ENCODE measurements at regions of chr1 and their contacts with region 1.

Region 1: DNA sequence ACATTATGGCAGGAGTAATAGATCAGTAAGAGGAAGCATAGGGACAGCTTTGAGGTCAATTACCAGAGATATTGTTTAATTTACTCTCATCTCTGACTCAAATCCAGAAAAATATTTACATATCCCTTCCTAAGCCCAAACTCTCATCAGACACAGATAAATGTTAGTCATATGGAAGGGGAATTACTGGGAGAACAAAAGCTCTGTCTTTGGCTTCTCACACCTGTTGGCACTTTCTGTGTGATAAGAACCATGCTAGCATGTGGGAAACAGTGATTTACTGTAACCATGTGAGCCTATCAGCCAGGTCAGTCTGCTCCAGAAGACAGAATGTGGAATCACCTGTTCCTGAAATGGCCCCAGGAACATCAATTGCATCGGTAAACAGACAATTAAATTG is 72.4 kb downstream of the DUSP10 start:
- DNase-seq: no peak
- ATAC-seq: no peak
- H3K4me3 ChIP-seq: no peak overlapping the region
- H3K4me3 Mint-ChIP-seq: no peak overlapping the region
- H3K27ac ChIP-seq: no peak overlapping the region
- H3K27ac Mint-ChIP-seq: no peak overlapping the region
- H3K4me1 ChIP-seq: no peaks in the 10 kb centered on the region
- H3K4me1 Mint-ChIP-seq: no peaks in the 10 kb centered on the region
- H3K27me3 ChIP-seq: no peaks in the 10 kb centered on the region
- H3K27me3 Mint-ChIP-seq: peaks cover 9% of the 10 kb centered on the region
- CTCF ChIP-seq: no peak

Region 2: DNA sequence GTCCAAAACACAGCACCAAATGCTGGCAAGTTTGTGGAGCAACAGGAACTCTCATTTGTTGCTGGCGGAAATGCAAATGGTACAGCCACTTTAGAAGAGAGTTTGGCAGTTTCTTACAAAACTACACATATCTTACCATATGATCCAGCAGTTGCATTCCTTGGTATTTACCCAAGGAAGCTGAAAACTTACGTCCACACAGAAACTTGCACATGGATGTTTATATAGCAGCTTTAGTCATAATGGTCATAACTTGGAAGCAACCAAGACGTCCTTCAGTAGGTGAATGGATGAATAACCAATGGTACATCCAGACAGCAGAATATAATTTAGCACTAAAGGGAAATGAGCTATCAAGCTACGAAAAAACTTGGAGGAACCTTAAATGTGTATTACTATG is 1075.1 kb before region 1 on chr1:
- CTCF ChIA-PET with region 1: no interaction called
- POLR2A ChIA-PET with region 1: no interaction called
- intact Hi-C with region 1: no loop called
- DNase-seq: no peak
- ATAC-seq: no peak
- H3K4me3 ChIP-seq: no peak overlapping the region
- H3K4me3 Mint-ChIP-seq: no peak overlapping the region
- H3K27ac ChIP-seq: no peak overlapping the region
- H3K27ac Mint-ChIP-seq: no peak overlapping the region
- H3K4me1 ChIP-seq: no peaks in the 10 kb centered on the region
- H3K4me1 Mint-ChIP-seq: no peaks in the 10 kb centered on the region
- H3K27me3 ChIP-seq: no peaks in the 10 kb centered on the region
- H3K27me3 Mint-ChIP-seq: peaks cover 10% of the 10 kb centered on the region
- CTCF ChIP-seq: no peak

Region 3: DNA sequence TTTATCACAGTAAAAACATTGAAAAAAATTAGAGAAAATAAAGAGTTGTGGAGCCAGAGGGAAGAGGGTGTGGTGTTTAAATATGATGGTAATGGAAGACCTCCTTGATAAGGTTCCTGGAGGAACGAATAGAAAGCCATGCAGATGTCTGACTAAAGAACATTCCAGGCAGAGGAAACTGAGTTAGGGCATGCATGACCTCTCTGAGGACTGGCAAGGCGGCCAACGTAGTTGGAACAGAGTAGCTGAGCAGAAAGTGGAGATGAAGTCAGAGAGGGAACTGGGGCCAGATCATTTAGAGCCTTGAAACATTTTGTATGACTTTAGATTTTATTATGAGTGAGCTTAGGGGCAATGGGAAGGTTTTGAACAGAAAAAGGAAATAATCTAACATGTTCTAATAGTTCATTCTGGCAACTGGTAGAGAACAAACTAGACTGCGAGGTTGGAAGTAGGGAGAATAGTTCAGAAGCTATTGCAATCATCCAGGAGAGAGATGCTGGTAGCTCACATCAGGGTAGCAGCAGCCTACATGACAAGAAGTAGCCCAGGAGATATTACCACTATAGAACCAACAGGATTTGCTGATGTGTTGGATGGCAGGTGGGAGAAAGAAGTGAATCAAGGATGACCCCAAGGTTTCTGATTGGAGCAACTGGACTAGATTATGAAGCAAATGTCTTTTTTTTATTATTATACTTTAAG is 412.5 kb before region 1 on chr1:
- CTCF ChIA-PET with region 1: no interaction called
- POLR2A ChIA-PET with region 1: no interaction called
- intact Hi-C with region 1: no loop called
- DNase-seq: no peak
- ATAC-seq: no peak
- H3K4me3 ChIP-seq: no peak overlapping the region
- H3K4me3 Mint-ChIP-seq: no peak overlapping the region
- H3K27ac ChIP-seq: no peak overlapping the region
- H3K27ac Mint-ChIP-seq: no peak overlapping the region
- H3K4me1 ChIP-seq: no peaks in the 10 kb centered on the region
- H3K4me1 Mint-ChIP-seq: no peaks in the 10 kb centered on the region
- H3K27me3 ChIP-seq: no peaks in the 10 kb centered on the region
- H3K27me3 Mint-ChIP-seq: no peaks in the 10 kb centered on the region
- CTCF ChIP-seq: no peak

Region 4: GRCh38 chr1:221643404-221644144 is 25.9 kb before region 1 on chr1:
- CTCF ChIA-PET with region 1: no interaction called
- POLR2A ChIA-PET with region 1: no interaction called
- intact Hi-C with region 1: loop called in 1 of 2 experiments (anchors 2 kb)
- DNase-seq: no peak
- ATAC-seq: no peak
- H3K4me3 ChIP-seq: no peak overlapping the region
- H3K4me3 Mint-ChIP-seq: no peak overlapping the region
- H3K27ac ChIP-seq: no peak overlapping the region
- H3K27ac Mint-ChIP-seq: no peak overlapping the region
- H3K4me1 ChIP-seq: no peaks in the 10 kb centered on the region
- H3K4me1 Mint-ChIP-seq: no peaks in the 10 kb centered on the region
- H3K27me3 ChIP-seq: no peaks in the 10 kb centered on the region
- H3K27me3 Mint-ChIP-seq: no peaks in the 10 kb centered on the region
- CTCF ChIP-seq: no peak

Region 5: DNA sequence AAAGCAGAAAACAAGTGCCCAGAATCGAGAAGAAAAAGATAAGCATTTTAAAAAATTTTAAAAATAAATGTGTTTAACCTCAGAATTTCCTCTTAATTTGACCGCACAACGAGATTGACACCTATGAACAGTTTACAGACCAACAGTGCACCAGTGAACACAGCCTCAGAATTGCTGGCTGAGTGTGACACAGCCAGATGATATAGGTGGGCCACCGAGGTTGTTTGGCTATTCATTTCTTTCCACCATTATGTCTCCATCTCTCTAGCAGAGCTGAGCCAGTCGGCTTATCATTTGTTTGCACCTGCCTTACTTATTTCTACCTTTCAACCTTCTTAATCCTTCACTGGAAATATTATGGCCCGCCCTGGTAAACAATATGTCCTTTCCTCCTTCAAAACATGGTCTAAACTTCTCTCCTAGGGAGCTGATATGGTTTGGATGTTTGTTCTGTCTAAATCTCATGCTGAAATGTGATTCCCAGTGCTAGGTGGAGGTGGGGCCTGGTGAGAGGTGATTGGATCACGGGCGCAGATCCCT is 13.6 kb before region 1 on chr1:
- CTCF ChIA-PET with region 1: no interaction called
- POLR2A ChIA-PET with region 1: no interaction called
- intact Hi-C with region 1: no loop called
- DNase-seq: no peak
- ATAC-seq: no peak
- H3K4me3 ChIP-seq: no peak overlapping the region
- H3K4me3 Mint-ChIP-seq: no peak overlapping the region
- H3K27ac ChIP-seq: no peak overlapping the region
- H3K27ac Mint-ChIP-seq: no peak overlapping the region
- H3K4me1 ChIP-seq: no peaks in the 10 kb centered on the region
- H3K4me1 Mint-ChIP-seq: no peaks in the 10 kb centered on the region
- H3K27me3 ChIP-seq: no peaks in the 10 kb centered on the region
- H3K27me3 Mint-ChIP-seq: no peaks in the 10 kb centered on the region
- CTCF ChIP-seq: no peak

Region 6: GRCh38 chr1:221683681-221684080 is 14.2 kb after region 1 on chr1:
- CTCF ChIA-PET with region 1: no interaction called
- POLR2A ChIA-PET with region 1: no interaction called
- intact Hi-C with region 1: no loop called
- DNase-seq: no peak
- ATAC-seq: no peak
- H3K4me3 ChIP-seq: no peak overlapping the region
- H3K4me3 Mint-ChIP-seq: no peak overlapping the region
- H3K27ac ChIP-seq: no peak overlapping the region
- H3K27ac Mint-ChIP-seq: no peak overlapping the region
- H3K4me1 ChIP-seq: no peaks in the 10 kb centered on the region
- H3K4me1 Mint-ChIP-seq: peaks cover 6% of the 10 kb centered on the region
- H3K27me3 ChIP-seq: no peaks in the 10 kb centered on the region
- H3K27me3 Mint-ChIP-seq: no peaks in the 10 kb centered on the region
- CTCF ChIP-seq: no peak

Measured in CD8-positive, alpha-beta T cell (primary cell).